ENCODE measurements at regions of chr6 and their contacts with region 1.

Region 1: DNA sequence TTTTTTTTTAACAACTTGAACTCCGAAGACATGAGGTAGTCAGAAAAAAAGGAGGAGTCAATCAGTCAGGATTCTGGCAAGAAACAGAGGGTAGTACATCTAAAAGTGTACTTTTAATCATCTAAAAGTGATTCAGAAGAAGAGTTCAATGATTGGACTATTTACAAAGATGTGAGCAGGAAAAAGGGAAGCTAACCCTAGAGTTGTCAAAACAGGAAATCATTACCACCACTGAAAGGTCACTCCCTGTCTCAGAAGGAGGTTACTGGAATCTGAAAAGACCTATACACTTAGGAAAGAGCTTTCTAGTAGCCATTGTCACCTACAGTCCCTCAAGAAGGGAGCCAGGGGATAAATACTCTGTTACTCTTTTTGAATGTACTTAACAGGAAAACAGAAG is 16.7 kb upstream of the LMBRD1 start:
- DNase-seq: no peak
- H3K4me3 Mint-ChIP-seq: peak overlapping the region; percentile 7
- H3K27ac Mint-ChIP-seq: peak overlapping the region; percentile 50
- H3K4me1 Mint-ChIP-seq: peaks cover 55% of the 10 kb centered on the region
- H3K27me3 Mint-ChIP-seq: no peaks in the 10 kb centered on the region

Region 2: DNA sequence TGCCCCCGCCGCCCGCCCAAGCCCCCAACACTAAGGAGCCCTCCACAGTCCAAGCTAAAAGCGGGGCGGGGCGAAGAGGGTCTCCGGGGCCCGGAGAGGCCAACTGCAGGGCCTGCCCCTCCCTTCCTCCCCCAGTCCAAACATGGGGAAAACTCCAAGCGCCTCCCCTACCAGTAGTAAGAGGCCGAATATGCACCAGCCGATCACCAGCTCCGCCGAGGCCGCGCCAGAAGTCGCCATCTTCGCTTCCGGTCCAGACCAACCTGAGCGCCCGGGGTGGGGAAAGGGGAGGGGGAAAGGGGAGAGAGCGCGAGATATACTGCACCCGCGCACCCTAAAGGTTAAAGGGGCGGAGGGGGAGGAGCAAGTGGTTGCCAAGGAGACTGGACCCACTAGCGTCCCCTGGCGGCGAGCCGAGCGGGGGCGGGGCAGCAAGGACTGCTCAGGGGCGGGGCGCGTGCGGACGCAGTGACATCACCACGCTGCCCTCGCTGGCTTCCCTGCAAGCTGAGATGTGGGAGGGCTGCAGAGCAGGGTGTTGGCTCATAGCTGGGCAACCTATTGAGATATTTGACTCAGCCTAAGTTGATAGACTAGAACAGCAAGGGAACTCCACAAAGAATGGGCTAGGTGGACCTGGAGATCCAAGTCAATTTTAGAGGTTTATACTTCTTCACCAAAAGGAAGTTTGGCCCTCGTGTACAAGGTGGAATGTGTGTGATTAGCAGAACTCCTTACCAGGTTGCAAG is 16.7 kb before region 1 on chr6 and contains the start of gene LMBRD1:
- intact Hi-C with region 1: loop called (anchors 1 kb)
- DNase-seq: peak; percentile 96
- H3K4me3 Mint-ChIP-seq: peak within 1 kb of the TSS; percentile 90
- H3K27ac Mint-ChIP-seq: peak within 1 kb of the TSS; percentile 89
- H3K4me1 Mint-ChIP-seq: peaks cover 33% of the 10 kb centered on the region
- H3K27me3 Mint-ChIP-seq: no peaks in the 10 kb centered on the region
- total RNA-seq, gene LMBRD1: 18.9 and 20.8 TPM in 2 replicates

Region 3: DNA sequence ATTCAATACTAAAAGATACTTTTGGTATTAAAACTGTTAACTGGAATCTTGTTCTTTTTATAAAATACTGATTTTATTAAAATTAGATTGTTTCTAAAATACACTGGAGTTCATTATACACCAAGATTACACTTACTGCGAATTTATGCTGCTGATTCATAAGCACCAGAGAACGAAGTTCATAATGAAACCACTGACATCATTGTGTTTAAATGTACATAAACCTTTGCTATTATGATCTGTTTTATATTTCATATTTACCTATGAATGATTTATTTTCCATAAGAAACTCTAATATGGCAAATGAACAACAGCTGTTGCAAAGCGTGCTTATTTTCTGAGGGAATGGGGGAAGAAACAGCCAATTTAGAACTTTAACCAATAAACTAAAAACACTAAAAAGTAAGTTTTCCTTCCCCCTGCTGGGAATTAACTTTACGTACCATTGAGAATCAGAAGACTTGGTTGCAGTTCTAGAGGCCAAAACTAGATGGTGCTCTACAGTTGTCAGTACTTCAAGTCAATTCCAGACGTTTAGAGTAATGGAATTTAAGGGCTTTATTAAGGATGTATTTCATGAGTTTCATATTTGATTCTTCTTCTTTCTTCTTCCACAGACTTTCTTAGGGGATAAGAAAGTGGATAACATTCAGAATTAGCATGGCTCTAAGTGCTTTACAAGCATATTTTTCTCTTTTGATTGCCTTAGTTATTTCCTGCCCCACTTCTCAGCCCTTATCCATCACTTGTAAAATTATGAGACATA is 22.1 kb after region 1 on chr6:
- intact Hi-C with region 1: loop called (anchors 2 kb)
- DNase-seq: no peak
- H3K4me3 Mint-ChIP-seq: no peak overlapping the region
- H3K27ac Mint-ChIP-seq: no peak overlapping the region
- H3K4me1 Mint-ChIP-seq: peaks cover 7% of the 10 kb centered on the region
- H3K27me3 Mint-ChIP-seq: peaks cover 28% of the 10 kb centered on the region

Region 4: GRCh38 chr6:69881322-69882151 is 68.0 kb after region 1 on chr6:
- intact Hi-C with region 1: no loop called
- DNase-seq: no peak
- H3K4me3 Mint-ChIP-seq: no peak overlapping the region
- H3K27ac Mint-ChIP-seq: no peak overlapping the region
- H3K4me1 Mint-ChIP-seq: no peaks in the 10 kb centered on the region
- H3K27me3 Mint-ChIP-seq: peaks cover 21% of the 10 kb centered on the region

Region 5: DNA sequence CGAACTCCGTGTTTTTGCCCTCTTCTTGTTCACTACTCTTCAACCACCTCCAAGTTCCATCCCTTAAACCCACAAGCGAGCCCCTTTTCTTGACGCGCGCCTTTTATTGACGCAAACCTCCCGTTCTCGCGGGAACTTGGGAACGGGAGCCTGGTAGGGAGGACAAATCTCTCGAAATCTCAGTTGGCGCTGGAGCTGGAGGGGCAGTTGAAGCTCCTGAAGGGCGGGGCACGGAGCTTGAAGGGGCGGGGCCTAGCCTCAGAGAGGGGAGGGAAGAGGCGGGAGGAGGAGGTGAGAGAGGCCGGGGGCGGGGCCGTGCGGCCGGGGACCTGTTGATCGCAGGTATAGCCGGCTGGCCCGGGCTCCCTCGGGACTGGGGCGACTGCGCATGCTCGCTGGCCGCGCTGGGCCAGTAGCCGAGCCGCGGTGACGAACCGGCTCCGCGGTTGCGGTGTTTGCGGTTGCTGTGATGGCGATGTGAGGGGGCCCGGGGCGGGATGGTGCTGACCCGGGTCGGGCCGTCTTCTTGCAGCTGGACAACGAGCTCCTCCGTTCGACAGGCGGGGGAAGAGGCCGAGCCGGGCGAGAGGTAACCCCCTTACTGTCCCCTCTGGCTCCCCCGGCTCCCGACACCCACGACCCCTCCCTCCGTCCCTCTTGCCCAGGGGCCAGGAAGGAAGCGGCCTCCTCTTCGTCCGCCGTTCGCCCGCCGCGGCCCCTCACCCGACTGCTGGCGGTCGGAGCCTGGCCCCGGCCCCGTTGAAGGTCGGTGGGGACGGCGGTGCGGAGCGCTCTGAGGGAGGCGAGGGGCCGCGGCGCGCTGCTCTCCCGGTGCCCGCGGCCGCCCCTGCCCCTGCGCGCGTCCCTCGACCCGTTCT is 599.8 kb after region 1 on chr6 and contains the start of gene FAM135A:
- intact Hi-C with region 1: loop called (anchors 10 kb)
- DNase-seq: peak; percentile 91
- H3K4me3 Mint-ChIP-seq: peak within 1 kb of the TSS; percentile 98
- H3K27ac Mint-ChIP-seq: peak within 1 kb of the TSS; percentile 90
- H3K4me1 Mint-ChIP-seq: peaks cover 25% of the 10 kb centered on the region
- H3K27me3 Mint-ChIP-seq: peaks cover 14% of the 10 kb centered on the region
- total RNA-seq, gene FAM135A: 8.0 and 9.4 TPM in 2 replicates